ENCODE measurements at regions of chr9 and their contacts with region 1.

Region 1: GRCh38 chr9:89428901-89429890 is 68.7 kb downstream of the SEMA4D start:
- DNase-seq: peak; percentile 44 to 87 (median 73)
- ATAC-seq: peak; percentile 65
- H3K4me3 ChIP-seq: no peak overlapping the region
- H3K4me3 Mint-ChIP-seq: peak overlapping the region; percentile 45
- H3K27ac ChIP-seq: peak overlapping the region in 1 of 2 experiments; percentile 66
- H3K27ac Mint-ChIP-seq: peak overlapping the region; percentile 98
- H3K4me1 ChIP-seq: peaks cover 99% of the 10 kb centered on the region
- H3K4me1 Mint-ChIP-seq: peaks cover 95% of the 10 kb centered on the region
- H3K27me3 ChIP-seq: no peaks in the 10 kb centered on the region
- H3K27me3 Mint-ChIP-seq: no peaks in the 10 kb centered on the region
- CTCF ChIP-seq: peak; percentile 75

Region 2: DNA sequence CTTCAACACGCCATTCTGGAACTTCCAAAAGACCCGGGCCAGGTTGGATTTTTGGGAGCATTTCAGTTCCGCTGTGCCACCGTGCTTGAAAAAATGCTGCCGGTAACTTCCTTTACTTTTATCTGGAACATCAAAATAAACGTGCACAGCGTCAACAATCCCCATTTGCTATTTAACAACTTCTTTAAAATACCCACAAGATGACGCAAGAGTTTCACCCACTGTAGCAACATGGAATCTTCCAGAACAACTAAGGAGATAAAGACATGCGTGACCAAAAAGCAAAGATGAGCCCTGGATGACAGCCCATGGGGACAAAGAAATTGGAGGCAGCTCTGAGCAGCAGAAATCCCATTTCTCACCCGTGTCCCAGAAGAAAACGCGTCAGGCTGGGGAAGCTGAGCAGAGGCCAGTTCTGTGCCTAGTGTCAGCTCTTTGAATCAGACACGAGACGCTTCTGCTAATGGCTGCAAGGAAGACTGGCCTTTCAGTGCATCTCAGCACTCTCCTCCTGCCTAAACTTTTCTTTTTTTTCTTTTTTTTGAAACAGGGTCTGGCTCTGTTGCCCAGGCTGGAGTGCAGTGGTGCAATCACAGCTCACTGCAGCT is 49.6 kb before region 1 on chr9:
- CTCF ChIA-PET with region 1: no interaction called
- POLR2A ChIA-PET with region 1: no interaction called
- intact Hi-C with region 1: no loop called
- DNase-seq: peak in 1 of 9 experiments; percentile 53
- ATAC-seq: peak; percentile 65
- H3K4me3 ChIP-seq: no peak overlapping the region
- H3K4me3 Mint-ChIP-seq: no peak overlapping the region
- H3K27ac ChIP-seq: no peak overlapping the region
- H3K27ac Mint-ChIP-seq: peak overlapping the region; percentile 73
- H3K4me1 ChIP-seq: peaks cover 10% of the 10 kb centered on the region
- H3K4me1 Mint-ChIP-seq: peaks cover 43% of the 10 kb centered on the region
- H3K27me3 ChIP-seq: no peaks in the 10 kb centered on the region
- H3K27me3 Mint-ChIP-seq: no peaks in the 10 kb centered on the region
- CTCF ChIP-seq: no peak

Region 3: GRCh38 chr9:89410641-89411350 is 18.4 kb before region 1 on chr9:
- CTCF ChIA-PET with region 1: interaction called, 6 read pairs
- POLR2A ChIA-PET with region 1: interaction called, 11 read pairs
- intact Hi-C with region 1: no loop called
- DNase-seq: peak in 3 of 9 experiments; percentile 23 to 72 (median 54)
- ATAC-seq: peak; percentile 30
- H3K4me3 ChIP-seq: no peak overlapping the region
- H3K4me3 Mint-ChIP-seq: peak overlapping the region; percentile 22
- H3K27ac ChIP-seq: peak overlapping the region in 1 of 2 experiments; percentile 29
- H3K27ac Mint-ChIP-seq: peak overlapping the region; percentile 84
- H3K4me1 ChIP-seq: peaks cover 62% of the 10 kb centered on the region
- H3K4me1 Mint-ChIP-seq: peaks cover 85% of the 10 kb centered on the region
- H3K27me3 ChIP-seq: no peaks in the 10 kb centered on the region
- H3K27me3 Mint-ChIP-seq: no peaks in the 10 kb centered on the region
- CTCF ChIP-seq: no peak

Region 4: DNA sequence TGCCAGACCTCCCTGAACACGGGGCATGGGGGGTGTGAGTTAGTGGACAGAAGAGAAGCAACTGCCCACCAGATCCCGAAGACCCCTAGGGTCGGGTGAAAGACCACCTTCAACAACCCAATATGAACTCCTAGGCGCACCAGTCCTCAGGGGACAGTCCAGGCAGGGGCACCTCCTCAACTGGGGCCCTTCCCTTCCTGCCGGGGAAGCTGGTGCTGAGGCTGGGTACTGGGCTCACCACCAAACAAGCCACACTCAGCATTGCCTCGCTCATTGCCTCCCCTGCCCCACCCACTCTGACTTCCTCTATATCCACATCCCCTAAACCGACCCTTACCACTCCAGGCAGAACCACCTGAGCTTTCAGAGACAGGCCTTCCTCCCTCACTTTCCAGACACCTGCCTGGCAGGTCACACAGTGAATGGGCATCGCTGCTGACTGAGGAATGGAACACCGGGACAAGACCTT is 26.2 kb after region 1 on chr9:
- CTCF ChIA-PET with region 1: interaction called, 17 read pairs
- POLR2A ChIA-PET with region 1: interaction called, 9 read pairs
- intact Hi-C with region 1: loop called in 1 of 2 experiments (anchors 2 kb)
- DNase-seq: peak in 7 of 9 experiments; percentile 46 to 78 (median 56)
- ATAC-seq: peak; percentile 53
- H3K4me3 ChIP-seq: peak overlapping the region in 1 of 2 experiments; percentile 7
- H3K4me3 Mint-ChIP-seq: peak overlapping the region; percentile 61
- H3K27ac ChIP-seq: peak overlapping the region; percentile 47 to 69
- H3K27ac Mint-ChIP-seq: peak overlapping the region; percentile 98
- H3K4me1 ChIP-seq: peaks cover 90% of the 10 kb centered on the region
- H3K4me1 Mint-ChIP-seq: peaks cover 94% of the 10 kb centered on the region
- H3K27me3 ChIP-seq: no peaks in the 10 kb centered on the region
- H3K27me3 Mint-ChIP-seq: no peaks in the 10 kb centered on the region
- CTCF ChIP-seq: no peak

Region 5: GRCh38 chr9:89483592-89484522 is 54.7 kb after region 1 on chr9:
- CTCF ChIA-PET with region 1: interaction called, 24 read pairs
- POLR2A ChIA-PET with region 1: interaction called, 4 read pairs
- intact Hi-C with region 1: loop called in 1 of 2 experiments (anchors 5 kb)
- DNase-seq: peak; percentile 44 to 88 (median 81)
- ATAC-seq: peak; percentile 76
- H3K4me3 ChIP-seq: peak overlapping the region; percentile 52
- H3K4me3 Mint-ChIP-seq: peak overlapping the region; percentile 86
- H3K27ac ChIP-seq: peak overlapping the region; percentile 20 to 66
- H3K27ac Mint-ChIP-seq: peak overlapping the region; percentile 96
- H3K4me1 ChIP-seq: peaks cover 77% of the 10 kb centered on the region
- H3K4me1 Mint-ChIP-seq: peaks cover 86% of the 10 kb centered on the region
- H3K27me3 ChIP-seq: no peaks in the 10 kb centered on the region
- H3K27me3 Mint-ChIP-seq: no peaks in the 10 kb centered on the region
- CTCF ChIP-seq: no peak

Region 6: GRCh38 chr9:89522261-89522958 is 93.2 kb after region 1 on chr9:
- CTCF ChIA-PET with region 1: interaction called, 13 read pairs
- POLR2A ChIA-PET with region 1: no interaction called
- intact Hi-C with region 1: loop called in 1 of 2 experiments (anchors 1 kb)
- DNase-seq: peak; percentile 46 to 95 (median 77)
- ATAC-seq: peak; percentile 85
- H3K4me3 ChIP-seq: peak overlapping the region in 1 of 2 experiments; percentile 4
- H3K4me3 Mint-ChIP-seq: peak overlapping the region; percentile 48
- H3K27ac ChIP-seq: peak overlapping the region; percentile 60 to 71
- H3K27ac Mint-ChIP-seq: peak overlapping the region; percentile 95
- H3K4me1 ChIP-seq: peaks cover 96% of the 10 kb centered on the region
- H3K4me1 Mint-ChIP-seq: peaks cover 100% of the 10 kb centered on the region
- H3K27me3 ChIP-seq: no peaks in the 10 kb centered on the region
- H3K27me3 Mint-ChIP-seq: no peaks in the 10 kb centered on the region
- CTCF ChIP-seq: no peak

Region 7: GRCh38 chr9:89597711-89598625 is 168.8 kb after region 1 on chr9:
- CTCF ChIA-PET with region 1: no interaction called
- POLR2A ChIA-PET with region 1: no interaction called
- intact Hi-C with region 1: no loop called
- DNase-seq: peak in 6 of 9 experiments; percentile 26 to 71 (median 55)
- ATAC-seq: peak; percentile 54
- H3K4me3 ChIP-seq: no peak overlapping the region
- H3K4me3 Mint-ChIP-seq: no peak overlapping the region
- H3K27ac ChIP-seq: no peak overlapping the region
- H3K27ac Mint-ChIP-seq: no peak overlapping the region
- H3K4me1 ChIP-seq: no peaks in the 10 kb centered on the region
- H3K4me1 Mint-ChIP-seq: peaks cover 5% of the 10 kb centered on the region
- H3K27me3 ChIP-seq: no peaks in the 10 kb centered on the region
- H3K27me3 Mint-ChIP-seq: peaks cover 8% of the 10 kb centered on the region
- CTCF ChIP-seq: peak; percentile 61

Region 8: DNA sequence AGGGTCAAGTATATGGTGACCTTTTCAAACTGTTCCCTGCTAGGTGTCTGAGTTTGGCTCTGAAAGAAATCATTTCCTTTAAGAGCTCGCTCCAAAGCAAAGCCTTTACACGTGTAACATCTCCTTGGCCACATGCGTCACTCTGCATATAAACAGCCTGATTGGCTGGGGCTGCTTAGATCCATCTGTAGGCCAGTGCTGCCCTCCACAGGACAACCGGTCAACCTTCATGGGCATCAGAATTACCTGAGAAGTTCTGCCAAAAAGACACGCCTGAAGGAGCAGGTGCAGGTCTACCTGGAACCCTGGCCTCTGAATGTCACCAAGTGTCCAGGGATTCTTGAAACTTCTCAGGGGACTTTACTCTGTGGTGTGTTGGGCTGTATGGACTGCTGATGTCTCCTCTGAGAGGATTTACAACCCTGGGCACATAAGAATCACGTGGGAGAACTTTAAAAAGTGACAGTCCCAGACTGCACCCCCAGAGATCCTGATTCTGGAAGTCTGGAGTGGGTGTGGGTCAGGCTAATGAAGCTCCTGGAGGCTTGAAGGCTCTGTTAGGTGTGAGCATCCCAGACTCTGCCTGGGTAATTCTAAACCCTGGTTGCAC is 673.2 kb after region 1 on chr9:
- CTCF ChIA-PET with region 1: no interaction called
- POLR2A ChIA-PET with region 1: no interaction called
- intact Hi-C with region 1: loop called in 1 of 2 experiments (anchors 10 kb)
- DNase-seq: peak; percentile 50 to 88 (median 71)
- ATAC-seq: peak; percentile 100
- H3K4me3 ChIP-seq: no peak overlapping the region
- H3K4me3 Mint-ChIP-seq: no peak overlapping the region
- H3K27ac ChIP-seq: no peak overlapping the region
- H3K27ac Mint-ChIP-seq: no peak overlapping the region
- H3K4me1 ChIP-seq: peaks cover 4% of the 10 kb centered on the region
- H3K4me1 Mint-ChIP-seq: peaks cover 5% of the 10 kb centered on the region
- H3K27me3 ChIP-seq: no peaks in the 10 kb centered on the region
- H3K27me3 Mint-ChIP-seq: peaks cover 13% of the 10 kb centered on the region
- CTCF ChIP-seq: peak; percentile 58